ENCODE measurements at regions of chr1 and their contacts with region 1.

Region 1: DNA sequence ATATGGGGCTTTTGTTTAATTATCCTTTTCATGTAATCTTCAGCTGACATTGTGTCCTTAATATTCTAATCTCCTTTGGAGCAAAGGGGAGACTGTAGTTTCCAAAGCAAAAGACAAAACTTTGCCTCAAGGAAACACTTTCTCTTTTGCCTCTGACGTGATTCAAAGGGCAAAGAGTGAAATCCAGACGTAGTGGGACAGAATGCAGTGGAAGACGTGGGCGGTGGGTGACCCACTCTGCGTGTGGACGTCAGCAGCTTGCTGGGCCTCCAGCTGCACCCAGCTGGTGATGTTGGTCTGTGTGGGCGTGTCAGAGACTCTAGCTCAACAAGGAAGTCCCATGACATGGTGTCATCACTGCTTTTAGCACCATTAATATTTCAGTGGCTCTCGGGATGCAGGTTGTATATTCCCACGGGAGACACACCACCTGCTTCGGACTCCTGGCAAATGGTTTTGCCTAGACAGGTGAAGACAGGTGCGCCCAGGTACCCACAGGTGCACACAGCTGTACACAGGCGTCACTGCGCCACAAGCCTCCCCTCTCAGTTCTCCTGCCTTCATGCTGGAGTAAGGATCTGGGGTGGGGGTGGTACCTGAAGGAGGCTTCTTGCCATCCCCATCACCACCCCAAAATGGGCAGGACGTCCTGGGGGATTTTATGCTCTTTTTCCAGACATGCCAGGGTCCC is 292.1 kb upstream of the VAMP3 start:
- ATAC-seq: peak in 7 of 8 experiments; percentile 79 to 93 (median 85)
- H3K4me3 ChIP-seq: no peak overlapping the region
- H3K27ac ChIP-seq: no peak overlapping the region
- H3K4me1 ChIP-seq: peaks cover 37 to 48% of the 10 kb centered on the region in 2 donors

Region 2: GRCh38 chr1:6969106-6969505 is 509.8 kb before region 1 on chr1:
- in situ Hi-C with region 1: no loop called
- ATAC-seq: no peak
- H3K4me3 ChIP-seq: no peak overlapping the region
- H3K27ac ChIP-seq: no peak overlapping the region
- H3K4me1 ChIP-seq: peaks cover 37 to 40% of the 10 kb centered on the region in 2 donors

Region 3: GRCh38 chr1:7379445-7379971 is 99.4 kb before region 1 on chr1:
- in situ Hi-C with region 1: loop called in 1 of 9 experiments (anchors 25 kb)
- ATAC-seq: peak in 7 of 8 experiments; percentile 29 to 90 (median 82)
- H3K4me3 ChIP-seq: peak overlapping the region in 2 of 5 donors; percentile 8 to 14
- H3K27ac ChIP-seq: peak overlapping the region; percentile 67 to 73
- H3K4me1 ChIP-seq: peaks cover 35 to 38% of the 10 kb centered on the region in 2 donors